ENCODE measurements at regions of chr12 and their contacts with region 1.

Region 1: GRCh38 chr12:111812881-111813741 is 28.9 kb upstream of the MAPKAPK5 start:
- DNase-seq: peak; percentile 82
- ATAC-seq: peak; percentile 96
- H3K4me3 Mint-ChIP-seq: no peak overlapping the region
- H3K27ac Mint-ChIP-seq: no peak overlapping the region
- H3K4me1 Mint-ChIP-seq: peaks cover 10% of the 10 kb centered on the region
- H3K27me3 Mint-ChIP-seq: peaks cover 9% of the 10 kb centered on the region

Region 2: GRCh38 chr12:111685744-111686517 is 127.2 kb before region 1 on chr12 and contains the starts of genes ACAD10 and BRAP:
- CTCF ChIA-PET with region 1: interaction called, 21 read pairs
- POLR2A ChIA-PET with region 1: no interaction called
- DNase-seq: peak; percentile 94
- ATAC-seq: peak; percentile 96
- H3K4me3 Mint-ChIP-seq: peak within 1 kb of the TSS; percentile 97
- H3K27ac Mint-ChIP-seq: peak within 1 kb of the TSS; percentile 97
- H3K4me1 Mint-ChIP-seq: peaks cover 31% of the 10 kb centered on the region
- H3K27me3 Mint-ChIP-seq: no peaks in the 10 kb centered on the region
- total RNA-seq, gene ACAD10: 24.9 to 27.3 TPM
- total RNA-seq, gene BRAP: 19.6 to 20.4 TPM

Region 3: GRCh38 chr12:111692575-111693210 is 120.4 kb before region 1 on chr12:
- CTCF ChIA-PET with region 1: interaction called, 11 read pairs
- POLR2A ChIA-PET with region 1: no interaction called
- DNase-seq: peak; percentile 26
- ATAC-seq: no peak
- H3K4me3 Mint-ChIP-seq: no peak overlapping the region
- H3K27ac Mint-ChIP-seq: no peak overlapping the region
- H3K4me1 Mint-ChIP-seq: peaks cover under 1% of the 10 kb centered on the region
- H3K27me3 Mint-ChIP-seq: no peaks in the 10 kb centered on the region

Region 4: GRCh38 chr12:111753144-111753881 is 59.8 kb before region 1 on chr12:
- CTCF ChIA-PET with region 1: interaction called, 40 read pairs
- POLR2A ChIA-PET with region 1: no interaction called
- DNase-seq: no peak
- ATAC-seq: no peak
- H3K4me3 Mint-ChIP-seq: no peak overlapping the region
- H3K27ac Mint-ChIP-seq: no peak overlapping the region
- H3K4me1 Mint-ChIP-seq: peaks cover 23% of the 10 kb centered on the region
- H3K27me3 Mint-ChIP-seq: no peaks in the 10 kb centered on the region

Region 5: DNA sequence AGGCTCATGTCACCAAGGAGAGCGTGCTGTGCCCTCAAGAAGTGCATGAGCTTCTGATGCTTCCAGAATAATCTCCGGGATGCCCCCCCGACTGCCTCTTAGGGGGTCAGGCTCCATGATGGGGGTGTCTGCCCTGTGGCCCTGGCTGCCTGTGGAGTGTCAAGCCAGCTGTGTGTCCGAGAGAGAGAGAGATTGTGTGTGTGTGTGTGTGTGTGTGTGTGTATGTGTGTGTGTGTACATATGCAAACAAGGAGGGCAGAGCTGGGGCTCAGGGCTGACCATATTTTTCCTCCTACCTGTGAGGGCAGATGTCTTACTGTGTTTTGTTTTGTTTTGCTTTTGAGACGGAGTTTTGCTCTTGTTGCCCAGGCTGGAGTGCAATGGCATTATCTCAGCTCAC is 52.0 kb before region 1 on chr12:
- CTCF ChIA-PET with region 1: interaction called, 40 read pairs
- POLR2A ChIA-PET with region 1: no interaction called
- DNase-seq: no peak
- ATAC-seq: no peak
- H3K4me3 Mint-ChIP-seq: no peak overlapping the region
- H3K27ac Mint-ChIP-seq: no peak overlapping the region
- H3K4me1 Mint-ChIP-seq: peaks cover 45% of the 10 kb centered on the region
- H3K27me3 Mint-ChIP-seq: peaks cover 30% of the 10 kb centered on the region

Region 6: DNA sequence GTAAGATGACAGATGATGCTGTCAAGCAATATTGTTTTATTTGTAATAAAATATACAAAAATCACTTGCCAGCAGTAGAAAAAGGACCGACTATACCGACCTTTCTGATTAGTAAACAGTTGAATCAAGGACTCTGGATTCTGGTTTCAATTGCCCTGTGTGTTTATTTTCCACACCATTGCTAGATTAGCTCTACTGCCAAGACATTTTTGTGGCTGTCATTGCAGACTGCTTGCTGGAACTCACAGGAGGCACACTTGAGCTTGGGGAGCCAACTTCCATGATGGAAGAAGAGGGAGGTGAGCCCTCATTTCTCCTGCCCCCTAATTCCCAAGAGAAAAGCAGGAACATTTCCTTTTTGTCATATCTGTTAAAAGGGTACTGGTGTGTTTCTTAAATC is 80.2 kb after region 1 on chr12:
- CTCF ChIA-PET with region 1: no interaction called
- POLR2A ChIA-PET with region 1: no interaction called
- DNase-seq: no peak
- ATAC-seq: no peak
- H3K4me3 Mint-ChIP-seq: no peak overlapping the region
- H3K27ac Mint-ChIP-seq: no peak overlapping the region
- H3K4me1 Mint-ChIP-seq: no peaks in the 10 kb centered on the region
- H3K27me3 Mint-ChIP-seq: no peaks in the 10 kb centered on the region

Measured in activated CD8-positive, alpha-beta T cell treated with anti-CD3 and anti-CD28 coated beads, Interleukin-2, amount 10 ng/mL, durations not matched to agents 7 days and 5 days (primary cell).